Colonic mucosa (tissue), 4 donors: ENCODE measurements at regions of chr2 and their contacts with region 1.

Region 1: DNA sequence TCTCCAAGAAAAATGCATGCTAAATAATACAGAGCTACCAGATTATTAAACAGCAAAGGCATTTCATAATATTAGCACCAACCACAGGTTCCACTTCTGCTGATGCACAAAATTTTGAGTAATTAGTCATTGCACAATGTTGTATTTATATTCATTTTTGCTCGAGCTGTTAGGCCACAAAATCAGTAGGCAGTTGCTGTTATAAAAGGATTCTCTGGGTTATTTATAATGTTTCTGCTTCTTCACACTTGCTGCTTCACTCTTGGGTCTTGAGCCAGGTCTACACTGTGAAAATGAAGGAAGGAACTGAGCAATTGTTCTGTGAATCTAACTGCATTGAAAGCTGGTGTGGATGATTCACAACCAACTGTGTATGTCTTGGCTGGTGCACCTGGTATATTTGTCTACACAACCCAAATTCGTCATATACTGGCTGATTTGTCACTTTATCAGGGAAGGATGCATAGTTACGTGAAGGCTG is 38.3 kb downstream of the MRPL33 start:
- DNase-seq: no peak
- H3K4me3 ChIP-seq: no peak overlapping the region
- H3K27ac ChIP-seq: no peak overlapping the region
- H3K4me1 ChIP-seq: no peaks in the 10 kb centered on the region
- H3K27me3 ChIP-seq: no peaks in the 10 kb centered on the region
- CTCF ChIP-seq: no peak

Region 2: GRCh38 chr2:27871802-27872201 is 62.0 kb after region 1 on chr2:
- intact Hi-C with region 1: loop called (anchors 10 kb)
- DNase-seq: no peak
- H3K4me3 ChIP-seq: no peak overlapping the region
- H3K27ac ChIP-seq: no peak overlapping the region
- H3K4me1 ChIP-seq: no peaks in the 10 kb centered on the region
- H3K27me3 ChIP-seq: no peaks in the 10 kb centered on the region
- CTCF ChIP-seq: no peak

Region 3: GRCh38 chr2:28011322-28011737 is 201.5 kb after region 1 on chr2:
- intact Hi-C with region 1: no loop called
- DNase-seq: no peak
- H3K4me3 ChIP-seq: no peak overlapping the region
- H3K27ac ChIP-seq: no peak overlapping the region
- H3K4me1 ChIP-seq: no peaks in the 10 kb centered on the region
- H3K27me3 ChIP-seq: no peaks in the 10 kb centered on the region
- CTCF ChIP-seq: no peak